Activated CD8-positive, alpha-beta memory T cell treated with anti-CD3 and anti-CD28 coated beads, Interleukin-2, amount 10 ng/mL, durations not matched to agents 7 days and 5 days (primary cell): ENCODE measurements at regions of chr1 and their contacts with region 1.

Region 1: DNA sequence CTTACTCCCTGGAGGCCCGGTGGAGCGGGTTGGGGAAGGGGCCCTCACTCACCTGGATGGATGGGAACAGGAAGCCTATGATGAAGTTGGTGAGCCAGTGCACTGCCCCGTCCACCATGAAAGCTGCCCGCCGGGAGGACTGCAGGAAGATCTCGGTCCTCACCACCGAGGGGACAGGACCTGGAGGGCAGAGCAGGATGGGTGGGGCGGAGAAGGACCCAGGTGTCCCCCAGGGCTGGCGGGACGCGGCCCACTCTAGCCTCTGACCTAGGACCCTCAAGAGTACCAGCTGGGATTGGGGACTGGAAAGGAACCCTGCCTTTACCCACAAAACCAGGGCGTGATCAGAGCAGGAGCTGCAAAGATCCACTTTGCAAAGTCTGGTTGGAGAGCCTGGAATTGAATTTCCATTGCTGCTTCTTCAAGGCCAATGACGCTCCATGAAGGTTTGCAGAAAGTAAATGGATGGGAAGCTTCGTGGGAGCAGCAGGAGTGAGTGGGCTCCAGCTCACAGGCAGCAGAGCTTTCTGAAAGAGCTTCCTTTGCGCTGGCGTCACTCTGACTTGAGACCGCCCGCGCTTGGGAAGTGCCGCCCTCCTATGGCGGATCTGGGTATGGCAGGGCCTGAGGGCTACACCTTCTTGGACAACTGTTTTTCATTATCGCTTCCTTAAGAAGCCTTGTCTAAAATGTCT is 21.4 kb downstream of the SLC2A7 start:
- DNase-seq: peak; percentile 90
- ATAC-seq: peak; percentile 94
- H3K4me3 Mint-ChIP-seq: no peak overlapping the region
- H3K27ac Mint-ChIP-seq: peak overlapping the region; percentile 25
- H3K4me1 Mint-ChIP-seq: peaks cover 14% of the 10 kb centered on the region
- H3K27me3 Mint-ChIP-seq: peaks cover 13% of the 10 kb centered on the region

Region 2: GRCh38 chr1:8858888-8859706 is 145.8 kb before region 1 on chr1:
- CTCF ChIA-PET with region 1: interaction called, 37 read pairs
- DNase-seq: peak; percentile 68
- ATAC-seq: peak; percentile 48
- H3K4me3 Mint-ChIP-seq: peak overlapping the region; percentile 32
- H3K27ac Mint-ChIP-seq: peak overlapping the region; percentile 90
- H3K4me1 Mint-ChIP-seq: peaks cover 60% of the 10 kb centered on the region
- H3K27me3 Mint-ChIP-seq: no peaks in the 10 kb centered on the region

Region 3: DNA sequence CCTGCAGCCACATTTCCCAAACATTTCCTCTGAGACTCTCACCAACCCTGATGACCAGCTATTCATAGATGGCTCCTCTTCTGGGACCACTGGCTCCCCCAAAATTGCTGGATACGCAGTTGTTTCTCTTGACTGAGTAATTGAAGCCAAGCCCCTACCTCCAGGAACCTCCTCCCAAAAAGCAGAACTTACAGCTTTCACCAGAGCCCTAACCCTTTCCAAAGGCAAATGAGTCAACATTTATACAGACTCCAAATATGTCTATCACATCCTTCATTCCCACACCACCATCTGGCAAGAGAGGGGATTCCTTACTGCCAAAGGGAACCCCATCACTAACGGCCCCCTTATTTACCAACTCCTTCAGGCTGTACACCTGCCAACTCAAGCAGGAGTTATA is 79.4 kb before region 1 on chr1:
- CTCF ChIA-PET with region 1: interaction called, 188 read pairs
- DNase-seq: no peak
- ATAC-seq: no peak
- H3K4me3 Mint-ChIP-seq: no peak overlapping the region
- H3K27ac Mint-ChIP-seq: no peak overlapping the region
- H3K4me1 Mint-ChIP-seq: peaks cover 33% of the 10 kb centered on the region
- H3K27me3 Mint-ChIP-seq: no peaks in the 10 kb centered on the region

Region 4: DNA sequence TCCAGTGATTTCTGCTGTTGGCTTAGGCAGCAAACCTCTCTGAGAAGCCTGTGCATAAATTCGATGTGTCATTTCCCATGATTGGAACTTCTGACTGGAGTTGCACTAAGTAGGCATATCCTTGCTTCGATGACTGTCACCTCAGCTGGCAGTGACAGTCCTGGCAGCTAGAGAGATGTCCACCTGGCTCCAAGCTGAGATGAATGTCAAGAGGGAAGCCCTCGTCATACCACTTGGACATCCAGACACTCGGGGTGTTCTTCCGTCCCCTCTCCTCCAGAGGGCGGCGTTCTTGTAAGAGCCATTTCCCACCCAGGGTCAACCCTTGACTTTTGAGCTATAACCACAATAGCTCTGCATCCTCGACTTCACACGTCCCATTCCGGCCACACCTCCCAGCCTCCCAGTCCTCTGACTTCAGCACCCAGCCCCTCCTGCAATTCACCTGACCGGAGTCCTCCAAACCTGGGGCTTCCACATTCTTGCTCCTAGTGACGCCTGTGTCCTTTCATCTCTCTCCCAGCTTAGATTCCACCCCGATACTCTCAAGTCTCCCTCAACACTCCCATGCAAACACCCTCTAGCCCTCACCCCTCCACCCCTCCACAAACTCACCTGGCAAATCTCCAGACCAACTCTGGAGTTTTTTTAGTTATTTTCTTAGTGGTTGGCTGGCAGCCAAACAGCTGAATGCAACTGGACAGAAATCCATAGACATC is 41.9 kb before region 1 on chr1:
- CTCF ChIA-PET with region 1: interaction called, 42 read pairs
- DNase-seq: peak; percentile 80
- ATAC-seq: peak; percentile 75
- H3K4me3 Mint-ChIP-seq: peak overlapping the region; percentile 45
- H3K27ac Mint-ChIP-seq: peak overlapping the region; percentile 80
- H3K4me1 Mint-ChIP-seq: peaks cover 79% of the 10 kb centered on the region
- H3K27me3 Mint-ChIP-seq: no peaks in the 10 kb centered on the region

Region 5: DNA sequence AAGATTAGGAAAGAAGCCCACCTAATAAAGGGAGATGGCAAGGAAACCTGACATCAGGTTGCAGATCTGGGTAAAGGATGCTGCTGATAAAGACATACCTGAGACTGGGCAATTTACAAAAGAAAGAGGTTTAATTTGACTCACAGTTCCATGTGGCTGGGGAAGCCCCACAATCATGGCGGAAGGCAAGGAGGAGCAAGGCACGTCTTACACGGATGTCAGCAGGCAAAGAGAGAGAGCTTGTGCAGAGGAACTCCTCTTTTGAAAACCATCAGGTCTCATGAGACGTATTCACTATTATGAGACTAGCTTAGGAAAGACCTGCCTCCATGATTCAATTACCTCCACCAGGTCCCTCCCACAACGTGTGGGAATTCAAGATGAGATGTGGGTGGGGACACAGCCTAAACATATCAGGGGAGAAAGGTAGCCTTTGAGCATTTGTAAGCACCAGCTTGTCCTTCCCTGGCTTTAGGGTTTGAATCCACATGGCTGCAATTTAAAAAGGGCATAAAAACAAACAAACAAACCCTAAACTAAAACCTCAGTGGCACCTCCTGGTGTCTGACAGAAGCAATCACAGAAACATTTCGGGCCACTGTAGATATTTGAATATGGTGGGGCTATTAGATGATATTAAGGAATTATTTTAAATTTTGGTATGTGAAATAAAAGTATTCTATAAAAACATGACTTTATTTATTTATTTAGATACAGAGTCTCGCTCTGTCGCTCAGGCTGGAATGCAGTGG is 11.7 kb before region 1 on chr1:
- CTCF ChIA-PET with region 1: interaction called, 88 read pairs
- DNase-seq: no peak
- ATAC-seq: no peak
- H3K4me3 Mint-ChIP-seq: no peak overlapping the region
- H3K27ac Mint-ChIP-seq: no peak overlapping the region
- H3K4me1 Mint-ChIP-seq: peaks cover 21% of the 10 kb centered on the region
- H3K27me3 Mint-ChIP-seq: no peaks in the 10 kb centered on the region

Region 6: DNA sequence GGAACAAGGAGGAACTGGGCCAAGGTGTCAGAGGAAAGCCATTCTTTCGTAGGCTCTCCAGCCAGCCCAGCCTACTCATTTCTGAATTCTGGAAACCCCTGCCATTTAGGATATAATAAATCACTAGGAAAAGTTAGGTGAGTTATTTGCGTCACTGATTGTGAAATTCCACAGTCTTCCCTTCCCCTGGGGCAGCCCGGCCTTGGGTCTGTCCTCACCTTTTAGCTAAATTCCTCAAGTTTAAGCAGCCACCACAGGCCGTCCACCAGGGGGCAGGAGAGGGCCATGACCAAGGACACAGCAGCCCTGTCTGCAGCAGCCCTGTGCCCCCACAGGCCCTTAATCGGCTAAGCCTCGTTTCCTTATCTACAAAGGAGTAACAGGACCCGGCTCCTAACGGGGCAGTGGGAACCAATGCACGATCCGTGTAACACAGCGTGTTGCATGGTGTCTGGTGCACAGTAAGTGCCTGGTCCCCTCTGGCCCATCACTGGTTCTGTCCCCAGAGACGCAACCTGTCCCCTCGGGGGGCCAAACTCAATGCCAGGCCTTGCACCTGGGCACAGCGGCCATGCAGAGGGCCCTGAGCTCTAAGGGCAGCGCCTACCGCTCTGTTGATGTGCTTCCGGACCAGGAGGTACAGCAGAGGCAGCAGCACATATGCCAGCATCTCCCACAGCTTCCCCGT is 106.0 kb after region 1 on chr1:
- CTCF ChIA-PET with region 1: interaction called, 11 read pairs
- DNase-seq: peak; percentile 91
- ATAC-seq: peak; percentile 81
- H3K4me3 Mint-ChIP-seq: no peak overlapping the region
- H3K27ac Mint-ChIP-seq: no peak overlapping the region
- H3K4me1 Mint-ChIP-seq: peaks cover 25% of the 10 kb centered on the region
- H3K27me3 Mint-ChIP-seq: no peaks in the 10 kb centered on the region